ENCODE measurements at regions of chr2 and their contacts with region 1.

Region 1: GRCh38 chr2:231900486-231900942 is 25.7 kb downstream of the NPPC start:
- DNase-seq: peak; percentile 65 to 79
- ATAC-seq: peak; percentile 49 to 84 (median 69)
- H3K4me3 ChIP-seq: no peak overlapping the region
- H3K27ac ChIP-seq: no peak overlapping the region
- H3K4me1 ChIP-seq: peaks cover 0 to 3% (median 0%) of the 10 kb centered on the region in 9 donors
- H3K27me3 ChIP-seq: peaks cover 0 to 24% (median 4%) of the 10 kb centered on the region in 7 donors
- CTCF ChIP-seq: peak; percentile 36 to 88 (median 74)

Region 2: DNA sequence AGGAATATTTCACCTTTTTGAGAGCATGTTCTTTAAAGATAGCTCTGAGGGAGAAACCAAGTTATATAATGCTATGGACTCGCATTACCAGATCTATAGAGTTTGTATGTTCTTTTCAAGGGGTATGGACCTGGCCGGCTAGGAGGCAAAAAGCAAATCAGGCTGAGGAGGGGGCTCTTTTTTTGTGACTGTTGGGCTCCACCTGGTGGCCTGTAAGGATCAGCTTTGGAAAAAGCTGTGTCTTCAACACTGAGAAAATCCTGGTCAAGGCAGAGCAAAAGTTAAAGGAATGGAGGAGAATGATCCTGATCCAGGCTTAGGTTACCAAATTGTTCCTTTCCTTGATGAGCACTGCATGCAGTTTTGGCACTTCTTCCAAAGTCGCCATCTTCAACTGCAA is 241.5 kb after region 1 on chr2:
- intact Hi-C with region 1: loop called in 3 of 10 experiments (anchors 5 kb)
- DNase-seq: peak in 1 of 2 donors; percentile 32
- ATAC-seq: peak in 6 of 8 donors; percentile 35 to 76 (median 58)
- H3K4me3 ChIP-seq: no peak overlapping the region
- H3K27ac ChIP-seq: no peak overlapping the region
- H3K4me1 ChIP-seq: peaks cover 0 to 18% (median 4%) of the 10 kb centered on the region in 9 donors
- H3K27me3 ChIP-seq: no peaks in the 10 kb centered on the region
- CTCF ChIP-seq: peak in 8 of 9 donors; percentile 50 to 79 (median 70)

Region 3: DNA sequence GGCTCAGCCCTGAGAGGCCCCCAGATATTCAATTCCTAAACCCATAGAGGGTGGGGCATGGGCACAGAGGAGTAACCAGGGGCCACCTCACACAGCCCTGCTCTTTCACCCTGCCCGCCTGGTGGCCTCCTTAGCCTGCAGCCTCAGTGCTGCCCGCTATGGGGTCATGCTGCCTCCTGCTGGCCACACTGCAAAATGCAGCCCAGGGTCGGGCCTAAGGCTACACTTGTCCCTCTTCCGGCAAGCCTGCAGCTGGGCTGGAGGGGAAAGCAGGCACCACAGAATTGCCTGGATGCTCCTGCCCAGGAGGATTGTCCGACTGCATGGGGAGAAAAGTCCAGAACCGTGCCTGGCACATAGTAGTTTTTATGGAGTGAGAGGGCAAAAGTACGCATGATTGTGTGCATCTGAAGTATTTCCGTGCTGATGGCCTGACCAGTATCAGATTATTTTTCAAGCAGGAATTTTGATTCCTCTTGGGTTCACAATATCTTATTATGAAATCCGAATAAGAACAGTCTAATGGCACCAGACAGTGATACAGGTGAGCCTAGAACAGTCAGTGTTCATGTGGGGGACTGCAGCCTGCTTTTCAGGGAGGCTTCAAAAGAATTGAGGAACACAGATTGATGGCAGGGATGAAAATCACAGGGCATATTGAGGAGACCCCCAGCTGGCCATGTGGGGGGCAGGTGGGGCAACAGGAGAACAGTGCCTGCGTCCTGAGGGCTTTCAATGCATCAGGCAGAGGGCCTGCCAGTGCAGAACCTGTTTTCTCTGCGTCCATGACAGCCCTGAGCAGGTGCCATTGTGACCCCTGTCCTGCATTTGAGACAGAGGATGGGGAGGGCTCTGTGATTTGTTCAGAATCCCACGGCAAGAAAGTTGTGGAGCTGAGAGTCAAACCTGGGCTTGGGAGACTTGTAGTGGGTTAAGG is 426.9 kb after region 1 on chr2:
- intact Hi-C with region 1: loop called in 7 of 10 experiments (anchors 5 kb)
- DNase-seq: peak; percentile 58 to 71
- ATAC-seq: peak in 7 of 8 donors; percentile 35 to 73 (median 66)
- H3K4me3 ChIP-seq: no peak overlapping the region
- H3K27ac ChIP-seq: no peak overlapping the region
- H3K4me1 ChIP-seq: peaks cover 0 to 11% (median 3%) of the 10 kb centered on the region in 9 donors
- H3K27me3 ChIP-seq: no peaks in the 10 kb centered on the region
- CTCF ChIP-seq: peak; percentile 56 to 84 (median 78)

Region 4: DNA sequence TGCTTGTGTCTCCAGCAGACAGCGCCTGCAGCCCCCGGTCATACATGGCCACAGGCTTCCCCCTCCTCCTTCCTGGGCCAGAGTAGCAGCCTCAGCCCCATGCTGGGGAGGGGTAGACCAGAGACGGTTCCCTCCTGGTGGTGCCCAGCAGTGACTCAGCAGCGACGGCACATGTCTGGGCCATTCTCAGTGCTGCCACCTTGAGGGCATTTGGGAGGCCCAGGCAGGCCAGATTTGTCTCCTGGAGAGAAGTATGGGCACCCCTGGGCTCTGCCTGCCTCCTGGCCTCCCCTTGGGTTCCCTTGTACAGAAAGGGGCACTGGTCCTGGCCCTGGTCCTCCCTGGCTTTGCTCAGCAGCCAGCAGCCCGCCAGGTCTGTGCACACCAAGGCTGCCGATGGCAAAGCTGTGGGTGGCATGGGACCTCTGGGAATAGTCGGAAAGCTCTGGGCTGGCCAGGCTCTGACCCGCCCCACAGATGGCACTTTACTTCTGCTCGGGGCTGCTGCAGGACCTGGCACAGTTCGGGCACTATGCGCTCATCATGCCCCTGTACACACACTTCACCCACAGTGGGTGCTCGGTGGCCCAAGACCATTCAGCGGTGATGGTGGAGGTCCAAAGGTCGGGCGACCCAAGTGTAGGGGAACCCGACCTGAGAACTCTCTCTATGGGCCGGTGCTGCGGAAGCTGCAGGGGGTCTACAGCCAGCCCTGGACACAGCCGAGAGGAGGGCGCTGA is 544.1 kb after region 1 on chr2:
- intact Hi-C with region 1: loop called in 5 of 10 experiments (anchors 5 kb)
- DNase-seq: no peak
- ATAC-seq: no peak
- H3K4me3 ChIP-seq: no peak overlapping the region
- H3K27ac ChIP-seq: no peak overlapping the region
- H3K4me1 ChIP-seq: peaks cover 0 to 11% (median 0%) of the 10 kb centered on the region in 9 donors
- H3K27me3 ChIP-seq: peaks cover 0 to 8% (median 0%) of the 10 kb centered on the region in 7 donors
- CTCF ChIP-seq: peak in 8 of 9 donors; percentile 21 to 68 (median 50)

Region 5: GRCh38 chr2:232521959-232522622 is 621.6 kb after region 1 on chr2:
- intact Hi-C with region 1: loop called in 9 of 10 experiments (anchors 5 to 10 kb)
- DNase-seq: peak; percentile 22 to 67
- ATAC-seq: peak in 6 of 8 donors; percentile 33 to 68 (median 52)
- H3K4me3 ChIP-seq: peak overlapping the region in 9 of 10 donors; percentile 15 to 38 (median 23)
- H3K27ac ChIP-seq: no peak overlapping the region
- H3K4me1 ChIP-seq: peaks cover 5 to 39% (median 31%) of the 10 kb centered on the region in 9 donors
- H3K27me3 ChIP-seq: peaks cover 20 to 85% (median 80%) of the 10 kb centered on the region in 7 donors
- CTCF ChIP-seq: peak; percentile 81 to 95 (median 92)